Activated T-helper 1 cell treated with anti-CD3 and anti-CD28 coated beads, Interleukin-12 subunit alpha, Interleukin-12 subunit beta, Interleukin-2, Interleukin-4 antibody, amounts not matched to agents 30 ng/mL and 10 ng/mL and 1 ng/mL, durations not matched to agents 14 hours and 24 hours and 36 hours (primary cell): ENCODE measurements at regions of chr7 and their contacts with region 1.

Region 1: GRCh38 chr7:3112479-3113134 is 68.9 kb upstream of the CARD11 start:
- DNase-seq: peak; percentile 37
- H3K4me3 Mint-ChIP-seq: peak overlapping the region; percentile 29
- H3K27ac Mint-ChIP-seq: peak overlapping the region; percentile 82
- H3K4me1 Mint-ChIP-seq: peaks cover 91% of the 10 kb centered on the region
- H3K27me3 Mint-ChIP-seq: peaks cover 5% of the 10 kb centered on the region

Region 2: DNA sequence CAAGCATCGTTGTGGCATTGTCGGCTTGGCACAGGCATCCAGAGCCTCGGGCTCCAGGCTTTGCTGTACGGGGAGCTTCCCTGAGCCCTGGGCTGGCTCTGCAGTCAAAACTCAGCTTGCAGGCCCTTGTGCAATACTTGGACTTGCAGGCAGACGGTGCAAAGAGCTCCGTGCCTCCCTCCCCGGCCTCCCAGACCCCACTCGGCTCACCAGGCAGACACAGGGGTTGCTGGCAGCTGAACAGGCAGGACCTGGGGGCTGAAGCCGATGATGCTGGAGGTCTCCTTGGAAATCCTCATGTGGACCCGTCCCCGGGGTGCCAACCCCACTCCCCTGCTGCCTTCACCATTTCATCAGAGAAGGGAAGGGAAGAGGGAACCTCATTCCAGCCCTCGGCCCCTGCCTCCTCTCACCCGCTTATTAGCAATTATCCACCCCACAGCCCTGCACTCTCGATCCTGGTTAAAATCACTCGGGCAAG is 208.9 kb before region 1 on chr7:
- intact Hi-C with region 1: loop called (anchors 5 kb)
- DNase-seq: no peak
- H3K4me3 Mint-ChIP-seq: no peak overlapping the region
- H3K27ac Mint-ChIP-seq: peak overlapping the region; percentile 87
- H3K4me1 Mint-ChIP-seq: peaks cover 30% of the 10 kb centered on the region
- H3K27me3 Mint-ChIP-seq: no peaks in the 10 kb centered on the region

Region 3: GRCh38 chr7:3143869-3144775 is 31.5 kb after region 1 on chr7:
- intact Hi-C with region 1: no loop called
- DNase-seq: no peak
- H3K4me3 Mint-ChIP-seq: no peak overlapping the region
- H3K27ac Mint-ChIP-seq: no peak overlapping the region
- H3K4me1 Mint-ChIP-seq: peaks cover 10% of the 10 kb centered on the region
- H3K27me3 Mint-ChIP-seq: peaks cover 11% of the 10 kb centered on the region